ENCODE measurements at regions of chr17 and their contacts with region 1.

Region 1: DNA sequence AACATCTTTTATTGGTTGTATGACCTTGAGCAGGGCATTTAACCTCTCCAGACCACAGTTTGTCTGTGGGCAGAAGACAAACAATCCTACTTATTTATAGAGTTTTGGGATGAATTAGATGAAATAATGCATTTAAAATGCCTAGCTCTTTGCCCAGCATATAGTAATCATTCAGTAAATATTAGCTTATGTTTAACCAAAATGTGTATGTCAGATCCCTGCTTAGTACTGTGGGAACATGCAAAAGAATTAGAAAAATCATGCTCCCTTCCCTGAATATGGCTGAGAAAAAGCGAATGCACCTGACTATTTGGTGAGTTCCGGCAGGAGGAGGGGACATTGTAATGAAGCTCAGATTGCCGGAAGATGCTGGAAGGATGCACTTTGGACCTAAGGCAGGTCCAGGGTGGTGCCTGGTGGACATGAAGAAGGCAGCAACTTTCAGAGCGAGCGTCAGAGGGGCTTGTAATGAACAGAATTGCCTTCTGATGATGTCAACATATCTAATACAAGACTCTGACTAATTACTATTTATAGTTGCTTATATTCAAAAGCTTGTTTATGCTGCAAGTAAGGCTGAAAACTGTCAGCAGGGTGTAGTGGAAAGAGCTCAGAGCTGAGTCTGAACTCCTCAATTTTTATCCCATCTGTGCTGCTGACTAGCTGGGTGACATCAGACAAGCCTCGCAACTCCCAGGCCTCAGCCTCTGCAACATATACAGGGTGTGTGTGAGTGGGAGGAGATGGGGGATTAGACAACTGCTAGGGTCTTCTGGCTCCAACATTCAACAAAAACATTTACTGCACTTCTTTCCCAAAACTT is 221.2 kb downstream of the PRKCA start:
- DNase-seq: no peak
- ATAC-seq: peak; percentile 84
- H3K4me3 ChIP-seq: no peak overlapping the region
- H3K27ac ChIP-seq: peak overlapping the region; percentile 84
- H3K4me1 ChIP-seq: peaks cover 38% of the 10 kb centered on the region
- H3K27me3 ChIP-seq: no peaks in the 10 kb centered on the region
- CTCF ChIP-seq: peak; percentile 17; the same call in 1 of the 2 replicates

Region 2: GRCh38 chr17:66255112-66255511 is 268.5 kb before region 1 on chr17:
- CTCF ChIA-PET with region 1: interaction called, 3 read pairs
- POLR2A ChIA-PET with region 1: no interaction called
- intact Hi-C with region 1: loop called (anchors 5 kb)
- DNase-seq: peak; percentile 93
- ATAC-seq: peak; percentile 94
- H3K4me3 ChIP-seq: no peak overlapping the region
- H3K27ac ChIP-seq: no peak overlapping the region
- H3K4me1 ChIP-seq: peaks cover 8% of the 10 kb centered on the region
- H3K27me3 ChIP-seq: no peaks in the 10 kb centered on the region
- CTCF ChIP-seq: peak; percentile 96

Region 3: DNA sequence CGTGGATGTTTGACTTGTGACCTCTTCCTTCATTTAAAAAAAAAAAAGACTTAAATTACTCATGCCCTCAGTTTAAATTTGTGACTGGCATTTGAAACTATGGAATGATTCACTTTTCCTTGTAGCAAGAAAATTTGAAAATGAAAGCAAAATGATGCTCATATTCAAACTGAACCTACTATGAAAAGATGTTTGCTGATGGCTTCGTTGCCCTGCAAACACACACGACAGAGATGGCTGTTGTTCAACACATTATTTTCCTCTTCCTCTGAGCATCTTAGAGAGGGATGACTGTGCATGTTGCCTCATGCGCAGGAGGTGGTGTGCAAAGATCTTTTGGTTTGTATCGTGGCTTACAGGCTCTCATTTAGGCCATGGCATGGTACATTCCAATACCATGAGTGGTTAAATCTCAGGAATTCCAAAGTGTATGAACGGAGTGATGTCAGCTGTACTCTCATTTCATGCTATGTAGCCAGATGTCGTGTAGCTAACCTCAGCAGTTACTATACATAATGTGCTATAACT is 56.7 kb before region 1 on chr17:
- CTCF ChIA-PET with region 1: interaction called, 5 read pairs
- POLR2A ChIA-PET with region 1: interaction called, 4 read pairs
- intact Hi-C with region 1: loop called (anchors 1 kb)
- DNase-seq: peak; percentile 99
- ATAC-seq: peak; percentile 92
- H3K4me3 ChIP-seq: peak overlapping the region; percentile 45
- H3K27ac ChIP-seq: peak overlapping the region; percentile 80
- H3K4me1 ChIP-seq: peaks cover 71% of the 10 kb centered on the region
- H3K27me3 ChIP-seq: no peaks in the 10 kb centered on the region
- CTCF ChIP-seq: no peak

Region 4: GRCh38 chr17:66477615-66478283 is 45.8 kb before region 1 on chr17:
- CTCF ChIA-PET with region 1: no interaction called
- POLR2A ChIA-PET with region 1: no interaction called
- intact Hi-C with region 1: no loop called
- DNase-seq: no peak
- ATAC-seq: no peak
- H3K4me3 ChIP-seq: no peak overlapping the region
- H3K27ac ChIP-seq: no peak overlapping the region
- H3K4me1 ChIP-seq: peaks cover 20% of the 10 kb centered on the region
- H3K27me3 ChIP-seq: no peaks in the 10 kb centered on the region
- CTCF ChIP-seq: no peak

Region 5: GRCh38 chr17:66541461-66542128 is 18.0 kb after region 1 on chr17:
- CTCF ChIA-PET with region 1: interaction called, 6 read pairs
- POLR2A ChIA-PET with region 1: interaction called, 4 read pairs
- intact Hi-C with region 1: loop called (anchors 1 kb)
- DNase-seq: peak; percentile 86
- ATAC-seq: peak; percentile 62
- H3K4me3 ChIP-seq: no peak overlapping the region
- H3K27ac ChIP-seq: peak overlapping the region; percentile 89
- H3K4me1 ChIP-seq: peaks cover 53% of the 10 kb centered on the region
- H3K27me3 ChIP-seq: no peaks in the 10 kb centered on the region
- CTCF ChIP-seq: no peak

Region 6: DNA sequence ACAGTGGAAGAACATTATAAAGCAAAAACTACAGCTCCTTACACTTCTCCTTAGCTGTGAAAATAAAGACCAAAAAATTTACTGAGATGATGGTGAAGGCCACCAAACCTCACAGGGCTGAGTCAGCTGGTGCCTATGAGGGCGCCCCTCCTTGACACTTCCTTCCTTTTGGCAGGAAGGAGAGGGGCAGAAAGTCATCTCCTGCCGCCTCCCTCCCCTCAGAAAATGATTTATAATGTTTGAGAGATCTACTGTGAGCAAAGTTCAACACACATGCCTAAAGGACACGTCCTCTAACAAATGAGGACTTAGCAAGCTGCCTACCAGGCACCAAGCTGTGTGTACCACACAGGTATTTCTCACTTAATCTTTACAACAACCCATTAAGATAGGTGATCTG is 24.6 kb after region 1 on chr17:
- CTCF ChIA-PET with region 1: interaction called, 4 read pairs
- POLR2A ChIA-PET with region 1: interaction called, 4 read pairs
- intact Hi-C with region 1: loop called (anchors 1 kb)
- DNase-seq: peak; percentile 85
- ATAC-seq: peak; percentile 49
- H3K4me3 ChIP-seq: peak overlapping the region; percentile 15; the same call in 1 of the 2 replicates
- H3K27ac ChIP-seq: peak overlapping the region; percentile 98
- H3K4me1 ChIP-seq: peaks cover 76% of the 10 kb centered on the region
- H3K27me3 ChIP-seq: no peaks in the 10 kb centered on the region
- CTCF ChIP-seq: no peak

Region 7: DNA sequence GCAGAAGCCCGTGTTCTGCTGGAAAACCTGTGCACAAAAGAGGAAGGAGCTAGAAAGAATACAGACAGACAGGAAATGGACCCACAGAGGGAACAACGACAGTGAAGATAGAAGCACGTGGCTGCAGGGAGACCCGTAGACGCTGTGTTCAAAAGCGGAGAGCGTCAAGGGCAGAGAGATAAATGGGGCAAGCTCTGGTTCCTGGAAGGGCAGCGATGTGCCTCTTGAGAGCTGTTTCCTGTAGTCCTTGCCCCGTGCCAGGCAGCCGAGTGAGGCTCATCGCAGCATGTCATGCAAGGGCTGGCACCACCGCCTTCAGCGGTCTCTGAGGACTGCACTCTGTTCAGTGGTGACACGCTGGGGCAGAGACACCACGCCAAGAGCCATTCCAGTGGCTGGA is 267.8 kb after region 1 on chr17:
- CTCF ChIA-PET with region 1: no interaction called
- POLR2A ChIA-PET with region 1: no interaction called
- intact Hi-C with region 1: no loop called
- DNase-seq: no peak
- ATAC-seq: no peak
- H3K4me3 ChIP-seq: no peak overlapping the region
- H3K27ac ChIP-seq: no peak overlapping the region
- H3K4me1 ChIP-seq: no peaks in the 10 kb centered on the region
- H3K27me3 ChIP-seq: no peaks in the 10 kb centered on the region
- CTCF ChIP-seq: no peak

Measured in PC-3 (cell line).